Caco-2 (cell line): ENCODE measurements at regions of chr15 and their contacts with region 1.

Region 1: DNA sequence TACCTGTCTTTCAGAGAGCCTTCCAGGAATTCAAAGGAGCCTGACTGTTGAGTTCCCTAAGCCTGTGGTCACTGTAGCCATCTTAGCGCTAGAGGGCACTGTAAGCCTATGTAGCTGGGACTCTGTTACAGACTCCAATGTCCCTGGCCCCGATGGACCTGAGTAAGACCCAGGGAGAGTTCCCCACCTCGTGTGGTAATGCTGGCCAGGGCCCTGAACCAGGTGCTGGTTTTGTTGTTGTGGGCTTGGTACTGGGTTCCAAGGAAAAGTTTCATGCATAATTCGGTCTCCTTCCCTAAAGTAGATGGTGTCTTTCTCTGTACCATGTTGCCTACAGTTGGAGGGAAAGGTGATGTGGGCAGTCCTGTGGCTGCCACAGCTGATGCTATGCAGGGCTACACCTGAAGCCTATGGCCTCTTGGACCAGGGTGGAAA is 32.4 kb downstream of the CDAN1 start:
- DNase-seq: peak; percentile 68 to 74
- H3K4me3 ChIP-seq: no peak overlapping the region
- H3K4me3 Mint-ChIP-seq: no peak overlapping the region
- H3K27ac Mint-ChIP-seq: no peak overlapping the region
- H3K4me1 ChIP-seq: no peaks in the 10 kb centered on the region
- H3K4me1 Mint-ChIP-seq: no peaks in the 10 kb centered on the region
- H3K27me3 ChIP-seq: no peaks in the 10 kb centered on the region
- H3K27me3 Mint-ChIP-seq: peaks cover 3% of the 10 kb centered on the region
- CTCF ChIP-seq: peak; percentile 81 to 89

Region 2: DNA sequence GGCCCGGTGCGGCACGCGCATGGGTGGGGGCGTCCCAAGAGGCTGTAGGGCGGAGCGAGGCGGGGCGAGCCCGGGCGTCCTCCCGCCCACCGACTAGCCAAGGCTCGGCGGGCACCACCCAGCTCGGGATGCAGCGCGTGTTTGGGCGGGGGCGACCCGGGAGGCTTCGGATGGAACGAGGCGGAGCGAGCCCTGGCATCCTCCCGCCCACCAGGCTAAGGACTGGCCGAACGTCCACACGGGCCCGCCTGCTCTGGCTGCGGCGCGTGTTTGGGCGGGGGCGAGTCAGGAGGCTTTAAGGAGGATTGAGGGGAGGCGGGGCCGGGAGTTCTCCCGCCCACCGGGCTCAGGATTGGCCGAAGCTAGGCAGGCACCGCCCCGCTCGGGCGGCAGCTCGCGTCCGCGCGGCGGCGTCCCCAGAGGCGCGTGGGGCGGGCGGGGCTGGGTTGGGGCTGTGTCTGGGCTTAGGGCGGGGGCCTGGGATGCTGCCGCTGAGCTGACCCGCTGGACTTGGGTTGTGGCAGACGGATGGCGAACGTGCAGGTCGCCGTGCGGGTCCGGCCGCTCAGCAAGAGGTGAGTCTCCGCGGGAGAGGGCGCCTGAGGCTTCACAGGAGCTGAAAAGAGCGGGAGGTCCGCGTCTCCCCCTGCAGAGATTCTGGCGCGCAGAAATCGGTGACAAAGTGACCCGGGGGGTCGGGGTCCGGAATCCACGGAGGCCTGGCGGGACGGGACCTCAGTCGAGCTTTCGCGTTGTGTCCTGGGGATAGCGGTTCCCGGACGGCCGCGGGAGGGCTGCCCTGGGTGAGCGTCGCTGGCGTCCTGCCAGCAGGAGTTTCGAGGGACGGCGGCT is 129.1 kb before region 1 on chr15 and contains the start of gene STARD9:
- CTCF ChIA-PET with region 1: no interaction called
- POLR2A ChIA-PET with region 1: no interaction called
- intact Hi-C with region 1: no loop called
- DNase-seq: peak; percentile 98
- H3K4me3 ChIP-seq: peak within 1 kb of the TSS; percentile 58
- H3K4me3 Mint-ChIP-seq: peak within 1 kb of the TSS; percentile 86
- H3K27ac Mint-ChIP-seq: peak within 1 kb of the TSS; percentile 37
- H3K4me1 ChIP-seq: 0 out of 2 replicates have a peak, but pooled peaks cover 10% of the 10 kb centered on the region
- H3K4me1 Mint-ChIP-seq: no peaks in the 10 kb centered on the region
- H3K27me3 ChIP-seq: peaks cover 1% of the 10 kb centered on the region; the same call in 1 of the 2 replicates
- H3K27me3 Mint-ChIP-seq: peaks cover 20% of the 10 kb centered on the region
- CTCF ChIP-seq: no peak
- total RNA-seq, gene STARD9: 0.56 and 0.86 TPM in 2 replicates

Region 3: DNA sequence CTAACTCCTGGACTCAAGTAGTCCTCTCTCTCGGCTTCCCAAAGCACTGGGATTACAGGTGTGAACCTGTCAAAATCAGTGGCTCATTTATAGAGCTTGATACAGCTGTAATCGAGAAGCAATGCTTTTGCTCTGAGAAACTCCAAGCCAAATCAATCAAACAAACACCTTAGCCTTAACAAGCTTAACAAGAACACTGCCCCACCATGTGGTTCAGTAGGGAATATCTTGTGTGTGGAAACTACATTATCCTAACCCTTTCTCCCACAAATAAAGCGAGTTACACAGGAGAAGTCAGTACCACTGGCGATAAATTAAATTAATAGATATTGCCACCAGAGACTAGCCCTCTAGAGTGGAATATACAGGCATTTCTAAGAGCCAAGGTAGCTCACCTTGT is 18.5 kb after region 1 on chr15:
- CTCF ChIA-PET with region 1: interaction called, 6 read pairs
- POLR2A ChIA-PET with region 1: no interaction called
- intact Hi-C with region 1: loop called (anchors 1 kb)
- DNase-seq: no peak
- H3K4me3 ChIP-seq: no peak overlapping the region
- H3K4me3 Mint-ChIP-seq: no peak overlapping the region
- H3K27ac Mint-ChIP-seq: no peak overlapping the region
- H3K4me1 ChIP-seq: no peaks in the 10 kb centered on the region
- H3K4me1 Mint-ChIP-seq: peaks cover 7% of the 10 kb centered on the region
- H3K27me3 ChIP-seq: no peaks in the 10 kb centered on the region
- H3K27me3 Mint-ChIP-seq: no peaks in the 10 kb centered on the region
- CTCF ChIP-seq: peak in 1 of 2 experiments; percentile 31

Region 4: GRCh38 chr15:43204016-43204901 is 499.8 kb after region 1 on chr15:
- CTCF ChIA-PET with region 1: no interaction called
- POLR2A ChIA-PET with region 1: no interaction called
- intact Hi-C with region 1: loop called (anchors 10 kb)
- DNase-seq: peak; percentile 59 to 61
- H3K4me3 ChIP-seq: no peak overlapping the region
- H3K4me3 Mint-ChIP-seq: no peak overlapping the region
- H3K27ac Mint-ChIP-seq: no peak overlapping the region
- H3K4me1 ChIP-seq: no peaks in the 10 kb centered on the region; the same call in 1 of the 2 replicates
- H3K4me1 Mint-ChIP-seq: peaks cover 7% of the 10 kb centered on the region
- H3K27me3 ChIP-seq: peaks cover 1% of the 10 kb centered on the region; the same call in 1 of the 2 replicates
- H3K27me3 Mint-ChIP-seq: peaks cover 7% of the 10 kb centered on the region
- CTCF ChIP-seq: peak; percentile 68 to 80